ENCODE measurements at regions of chr15 and their contacts with region 1.

Region 1: GRCh38 chr15:25684521-25685431 is 178.4 kb downstream of the ATP10A start:
- DNase-seq: peak; percentile 85
- H3K4me3 ChIP-seq: no peak overlapping the region
- H3K27ac ChIP-seq: peak overlapping the region; percentile 65 to 76 (median 71)
- H3K4me1 ChIP-seq: peaks cover 0 to 40% (median 33%) of the 10 kb centered on the region in 4 donors
- H3K27me3 ChIP-seq: no peaks in the 10 kb centered on the region
- CTCF ChIP-seq: no peak
- EP300 ChIP-seq: peak in 2 of 4 donors; percentile 44 to 55
- POLR2A ChIP-seq: no peak

Region 2: DNA sequence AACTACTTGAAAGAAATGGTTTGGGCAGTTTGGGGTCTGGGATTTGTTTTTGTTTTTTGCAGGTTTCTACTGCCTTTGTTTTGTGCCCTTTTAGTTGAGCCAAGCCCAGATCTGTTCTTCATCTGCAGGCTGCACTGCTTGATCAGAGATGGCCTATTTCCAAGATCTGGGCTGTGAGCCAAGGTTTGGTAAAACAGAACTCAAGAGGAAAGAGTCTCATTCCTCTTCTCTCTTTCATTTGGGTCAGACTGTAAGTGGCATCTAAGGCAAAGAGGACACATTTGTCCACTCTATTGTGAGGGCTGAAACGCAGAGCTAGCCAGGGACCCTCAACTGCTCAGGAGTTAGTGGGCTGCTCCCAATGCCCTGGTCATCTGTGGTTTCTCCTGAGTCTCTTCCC is 141.6 kb before region 1 on chr15:
- intact Hi-C with region 1: loop called (anchors 5 kb)
- DNase-seq: peak; percentile 90
- H3K4me3 ChIP-seq: no peak overlapping the region
- H3K27ac ChIP-seq: peak overlapping the region; percentile 63 to 74 (median 69)
- H3K4me1 ChIP-seq: peaks cover 0 to 44% (median 34%) of the 10 kb centered on the region in 4 donors
- H3K27me3 ChIP-seq: no peaks in the 10 kb centered on the region
- CTCF ChIP-seq: no peak
- EP300 ChIP-seq: no peak
- POLR2A ChIP-seq: no peak